Adrenal gland (tissue), 19 donors: ENCODE measurements at regions of chr19 and their contacts with region 1.

Region 1: GRCh38 chr19:9140159-9140874 is at the start of gene ZNF317:
- DNase-seq: peak; percentile 92 to 98 (median 94)
- H3K4me3 ChIP-seq: peak within 1 kb of the TSS; percentile 25 to 100 (median 84)
- H3K27ac ChIP-seq: peak within 1 kb of the TSS; percentile 71 to 92 (median 91)
- H3K4me1 ChIP-seq: peaks cover 0 to 22% of the 10 kb centered on the region in 2 donors
- H3K27me3 ChIP-seq: no peaks in the 10 kb centered on the region
- CTCF ChIP-seq: no peak
- POLR2A ChIP-seq: peak; percentile 10 to 68
- total RNA-seq, gene ZNF317: 18.3 to 32.9 (median 28.0) TPM

Region 2: DNA sequence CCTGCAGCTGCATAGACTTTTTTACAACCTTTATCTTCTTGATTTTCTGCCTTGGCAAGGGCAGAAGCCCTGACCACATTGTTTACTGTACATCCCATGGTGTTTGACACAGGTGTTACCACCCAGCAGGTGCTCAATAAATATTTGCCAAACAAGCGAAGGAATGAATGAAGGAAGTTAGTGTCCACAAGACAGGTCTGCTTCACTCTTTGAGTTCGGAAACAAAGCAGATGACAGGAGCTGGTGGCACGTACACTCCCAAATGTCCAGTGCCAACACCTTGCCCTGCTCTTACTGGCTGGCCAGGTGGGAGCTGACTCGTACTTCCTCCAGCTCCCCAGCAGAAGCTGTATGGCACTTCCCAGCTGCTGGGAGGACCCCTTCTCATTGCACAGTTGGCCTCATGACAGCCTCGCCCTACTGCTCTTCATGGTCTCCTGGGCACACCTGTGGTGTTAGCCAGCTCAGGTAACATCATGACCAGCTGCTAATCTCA is 108.1 kb before region 1 on chr19:
- intact Hi-C with region 1: no loop called
- DNase-seq: no peak
- H3K4me3 ChIP-seq: no peak overlapping the region
- H3K27ac ChIP-seq: no peak overlapping the region
- H3K4me1 ChIP-seq: no peaks in the 10 kb centered on the region
- H3K27me3 ChIP-seq: no peaks in the 10 kb centered on the region
- CTCF ChIP-seq: no peak
- POLR2A ChIP-seq: no peak

Region 3: DNA sequence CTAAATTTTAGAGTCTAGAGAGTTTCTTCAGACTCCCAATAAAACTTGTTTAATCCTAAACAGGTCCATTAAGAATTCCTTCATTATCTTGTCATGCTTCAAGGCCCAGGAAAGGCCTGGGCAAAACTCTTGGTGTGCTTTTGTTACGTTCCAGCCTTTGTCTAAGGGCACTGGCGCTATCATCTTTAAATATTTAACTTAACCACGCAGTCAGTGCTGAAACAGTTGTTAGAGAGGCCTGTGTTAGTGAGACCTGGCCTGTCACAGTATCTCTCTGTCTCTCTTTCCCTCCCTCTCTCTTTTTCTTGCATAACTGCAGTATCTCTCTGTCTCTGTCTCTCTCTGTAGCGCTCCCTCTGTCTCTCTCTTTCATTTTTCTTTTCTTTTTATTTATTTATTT is 61.7 kb before region 1 on chr19:
- intact Hi-C with region 1: no loop called
- DNase-seq: no peak
- H3K4me3 ChIP-seq: no peak overlapping the region
- H3K27ac ChIP-seq: no peak overlapping the region
- H3K4me1 ChIP-seq: peaks cover 0 to 5% of the 10 kb centered on the region in 2 donors
- H3K27me3 ChIP-seq: no peaks in the 10 kb centered on the region
- CTCF ChIP-seq: no peak
- POLR2A ChIP-seq: no peak

Region 4: DNA sequence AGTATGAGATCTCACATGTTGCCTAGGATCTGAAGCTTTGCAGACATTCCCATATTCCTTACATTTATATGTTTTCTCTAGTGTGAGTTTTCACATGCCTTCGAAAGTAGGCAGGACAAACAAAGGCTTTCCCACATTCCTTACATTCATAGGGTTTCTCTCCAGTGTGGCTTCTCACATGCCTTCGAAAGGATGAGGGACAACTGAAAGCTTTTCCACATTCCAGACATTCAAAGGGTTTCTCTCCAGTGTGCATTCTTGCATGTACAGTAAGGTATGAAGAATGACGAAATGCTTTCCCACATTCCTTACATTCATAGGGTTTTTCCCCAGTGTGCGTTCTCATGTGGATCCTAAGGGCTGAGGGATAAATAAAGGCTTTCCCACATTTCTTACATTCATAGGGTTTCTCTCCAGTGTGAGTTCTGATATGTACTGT is 155.1 kb after region 1 on chr19:
- intact Hi-C with region 1: no loop called
- DNase-seq: no peak
- H3K4me3 ChIP-seq: peak overlapping the region in 1 of 4 donors; percentile 17
- H3K27ac ChIP-seq: no peak overlapping the region
- H3K4me1 ChIP-seq: no peaks in the 10 kb centered on the region
- H3K27me3 ChIP-seq: no peaks in the 10 kb centered on the region
- CTCF ChIP-seq: no peak
- POLR2A ChIP-seq: no peak

Region 5: DNA sequence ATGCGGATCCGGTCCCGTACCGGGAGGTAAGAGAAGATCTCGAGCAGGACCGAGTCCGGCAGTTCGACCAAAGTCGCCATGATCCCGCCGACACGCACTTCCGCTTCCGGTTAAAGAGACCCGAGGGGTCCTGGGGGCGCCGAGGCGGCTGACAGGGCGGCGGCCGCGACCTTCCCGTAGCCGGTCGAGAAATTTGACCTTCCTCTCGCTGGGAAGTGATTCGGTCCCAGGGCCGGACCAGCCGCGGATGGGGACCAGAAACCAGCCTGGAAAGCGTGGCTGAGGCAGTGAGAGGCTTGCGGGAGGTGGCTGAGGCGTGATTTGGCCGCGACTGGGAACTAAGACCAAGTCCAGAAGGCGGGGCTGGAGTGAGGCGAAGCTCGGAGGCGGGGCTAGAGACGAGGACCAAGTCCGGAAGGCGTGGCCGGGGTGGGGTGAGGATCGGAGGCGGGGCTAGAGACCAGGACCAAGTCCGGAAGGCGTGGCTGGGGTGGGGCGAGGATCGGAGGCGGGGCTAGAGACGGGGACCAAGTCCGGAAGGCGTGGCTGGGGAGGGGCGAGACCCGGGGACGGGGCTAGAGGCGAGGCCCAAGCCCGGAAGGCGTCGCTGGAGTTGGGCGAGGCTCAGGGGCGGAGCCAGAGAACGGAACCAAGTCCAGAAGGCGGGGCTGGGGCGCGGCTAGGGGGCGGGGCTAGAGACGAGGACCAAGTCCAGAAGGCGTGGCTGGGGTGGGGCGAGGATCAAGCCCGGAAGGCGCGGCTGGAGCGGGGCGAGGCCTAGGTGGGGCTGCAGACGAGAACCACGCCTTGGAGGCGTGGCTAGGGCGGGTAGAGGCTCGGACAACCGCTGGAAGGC is 678.6 kb after region 1 on chr19 and contains the start of gene FBXL12:
- intact Hi-C with region 1: loop called in 1 of 2 experiments (anchors 10 kb)
- DNase-seq: peak; percentile 100
- H3K4me3 ChIP-seq: peak within 1 kb of the TSS; percentile 51 to 92 (median 82)
- H3K27ac ChIP-seq: peak within 1 kb of the TSS; percentile 73 to 99 (median 97)
- H3K4me1 ChIP-seq: peaks cover 5 to 16% of the 10 kb centered on the region in 2 donors
- H3K27me3 ChIP-seq: no peaks in the 10 kb centered on the region
- CTCF ChIP-seq: no peak
- POLR2A ChIP-seq: peak; percentile 78 to 89
- total RNA-seq, gene FBXL12: 12.4 to 23.7 (median 20.1) TPM